ENCODE measurements at regions of chr10 and their contacts with region 1.

Region 1: GRCh38 chr10:110137142-110137545 is 70.3 kb upstream of the MXI1 start:
- DNase-seq: peak; percentile 77
- H3K4me3 Mint-ChIP-seq: no peak overlapping the region
- H3K27ac Mint-ChIP-seq: peak overlapping the region; percentile 64
- H3K4me1 Mint-ChIP-seq: peaks cover 25% of the 10 kb centered on the region
- H3K27me3 Mint-ChIP-seq: no peaks in the 10 kb centered on the region

Region 2: DNA sequence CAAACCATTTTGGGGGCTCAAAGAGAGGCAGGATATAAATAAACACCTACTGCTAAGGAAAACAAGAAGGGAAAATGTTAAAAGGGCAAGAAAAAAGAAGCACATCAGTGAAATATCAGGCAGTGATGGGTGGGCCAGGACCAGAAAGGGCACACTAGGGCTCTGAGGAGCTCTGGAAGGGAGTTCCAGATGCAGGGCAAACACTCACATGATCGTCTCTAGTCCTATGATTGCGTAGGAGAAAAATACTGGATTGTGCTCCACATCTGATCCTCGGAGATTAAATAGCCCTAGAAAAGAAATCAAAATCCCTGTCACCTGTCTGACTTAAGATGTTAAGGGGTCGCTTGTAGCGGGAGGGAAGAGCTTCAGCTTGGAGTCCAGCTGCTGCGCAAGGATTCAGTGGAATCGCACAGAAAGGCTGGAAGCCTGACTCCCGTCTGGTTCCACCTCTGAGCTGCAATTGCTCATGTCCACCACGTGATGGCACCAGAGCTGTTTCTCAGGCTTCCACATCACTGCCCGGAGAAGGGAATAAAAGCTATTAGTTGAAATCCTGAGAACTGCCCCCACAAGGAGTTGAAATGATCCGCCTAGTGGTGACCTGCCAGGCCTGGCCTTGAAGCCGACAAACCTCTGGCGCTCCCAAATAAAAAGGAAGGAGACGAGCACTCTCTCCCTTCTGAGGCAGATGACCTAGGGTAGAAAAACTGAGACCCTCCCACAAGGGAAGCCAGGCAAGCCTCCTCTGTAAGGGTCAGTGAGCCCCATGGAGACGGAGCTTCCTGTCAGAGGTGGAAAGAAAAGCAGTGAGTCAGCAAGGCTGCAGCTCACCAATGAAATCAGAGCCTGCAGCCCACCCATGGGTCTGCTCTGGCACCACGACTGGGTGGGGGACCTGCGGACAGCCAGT is 253.0 kb before region 1 on chr10:
- intact Hi-C with region 1: loop called (anchors 1 kb)
- DNase-seq: peak; percentile 87
- H3K4me3 Mint-ChIP-seq: no peak overlapping the region
- H3K27ac Mint-ChIP-seq: no peak overlapping the region
- H3K4me1 Mint-ChIP-seq: peaks cover 13% of the 10 kb centered on the region
- H3K27me3 Mint-ChIP-seq: no peaks in the 10 kb centered on the region

Region 3: DNA sequence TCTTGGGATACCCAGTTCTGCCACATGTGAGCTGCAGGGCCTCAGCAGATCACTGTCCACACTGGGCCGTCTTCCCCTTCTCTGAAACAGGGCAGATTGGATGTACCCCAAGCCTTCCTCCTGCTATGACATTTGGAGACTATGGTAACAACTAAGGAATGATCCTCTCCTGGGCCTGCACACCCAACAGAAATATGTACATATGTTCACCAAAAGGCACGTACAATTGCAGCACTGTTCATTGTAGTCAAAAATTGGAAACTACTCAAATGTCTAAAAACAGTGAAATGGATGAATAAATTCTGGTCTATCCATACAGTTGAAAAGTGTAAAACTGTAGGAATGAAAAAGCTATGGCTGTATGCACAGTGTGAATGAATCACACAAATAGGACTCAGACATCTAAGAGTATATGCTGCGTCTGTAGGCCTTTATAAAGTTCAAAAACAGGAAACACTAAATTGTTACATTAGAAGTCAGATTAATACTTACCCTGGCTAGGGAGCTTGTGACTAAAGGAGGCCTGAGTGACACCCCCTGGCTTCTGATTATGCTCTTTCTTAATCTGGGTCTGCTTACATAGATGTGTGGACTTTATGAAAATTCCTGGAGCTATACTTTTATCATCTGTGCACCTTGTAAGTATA is 197.7 kb before region 1 on chr10:
- intact Hi-C with region 1: no loop called
- DNase-seq: no peak
- H3K4me3 Mint-ChIP-seq: no peak overlapping the region
- H3K27ac Mint-ChIP-seq: no peak overlapping the region
- H3K4me1 Mint-ChIP-seq: peaks cover 13% of the 10 kb centered on the region
- H3K27me3 Mint-ChIP-seq: peaks cover 1% of the 10 kb centered on the region

Region 4: DNA sequence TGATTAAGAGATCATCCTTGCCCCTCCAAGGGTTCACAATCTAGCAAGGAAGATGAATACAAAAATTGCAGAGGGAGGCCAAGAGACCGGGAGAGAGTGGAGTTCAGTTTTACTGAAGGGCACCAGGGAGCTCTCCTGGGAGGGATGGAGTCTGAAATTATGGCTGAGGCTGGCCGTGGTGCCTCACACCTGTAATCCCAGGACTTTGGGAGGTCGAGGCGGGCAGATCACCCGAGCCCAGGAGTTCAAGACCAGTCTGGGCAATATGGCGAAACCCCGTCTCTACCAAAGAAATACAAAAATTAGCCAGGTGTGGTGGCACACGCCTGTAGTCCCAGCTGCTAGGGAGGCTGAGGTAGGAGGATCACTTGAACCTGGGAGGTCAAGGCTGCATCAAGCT is 18.9 kb after region 1 on chr10:
- intact Hi-C with region 1: loop called (anchors 1 kb)
- DNase-seq: no peak
- H3K4me3 Mint-ChIP-seq: no peak overlapping the region
- H3K27ac Mint-ChIP-seq: no peak overlapping the region
- H3K4me1 Mint-ChIP-seq: peaks cover 46% of the 10 kb centered on the region
- H3K27me3 Mint-ChIP-seq: peaks cover 76% of the 10 kb centered on the region

Region 5: GRCh38 chr10:110252151-110252550 is 115.0 kb after region 1 on chr10:
- intact Hi-C with region 1: loop called (anchors 1 kb)
- DNase-seq: no peak
- H3K4me3 Mint-ChIP-seq: no peak overlapping the region
- H3K27ac Mint-ChIP-seq: peak overlapping the region; percentile 56
- H3K4me1 Mint-ChIP-seq: peaks cover 34% of the 10 kb centered on the region
- H3K27me3 Mint-ChIP-seq: peaks cover 31% of the 10 kb centered on the region

Region 6: DNA sequence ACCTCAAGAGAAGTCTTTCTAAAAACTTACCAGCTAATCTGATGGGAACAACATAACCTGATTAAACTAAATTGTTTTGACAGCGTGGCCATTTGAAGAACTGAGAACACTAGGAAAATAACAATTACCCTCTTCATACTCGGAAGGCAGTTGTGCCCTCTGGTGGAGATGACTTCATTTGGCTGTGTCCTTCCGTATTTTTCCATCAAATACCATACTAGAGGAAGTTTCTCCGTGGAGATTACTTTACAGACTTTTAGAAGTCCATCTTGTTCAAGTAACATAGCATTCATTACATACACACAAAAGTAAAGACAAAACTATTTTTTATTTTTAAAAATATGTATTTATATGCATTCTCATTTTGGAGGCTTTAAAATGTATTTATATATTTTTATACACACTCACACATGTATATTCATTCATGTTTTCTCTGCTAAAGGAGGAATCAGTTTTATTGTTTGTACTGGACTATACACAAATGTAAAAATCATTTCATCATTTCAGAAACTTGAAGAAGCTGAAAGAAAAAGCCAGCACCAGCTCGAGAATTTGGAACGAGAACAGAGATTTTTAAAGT is 142.4 kb after region 1 on chr10:
- intact Hi-C with region 1: loop called (anchors 1 kb)
- DNase-seq: peak; percentile 81
- H3K4me3 Mint-ChIP-seq: no peak overlapping the region
- H3K27ac Mint-ChIP-seq: no peak overlapping the region
- H3K4me1 Mint-ChIP-seq: peaks cover 11% of the 10 kb centered on the region
- H3K27me3 Mint-ChIP-seq: peaks cover 13% of the 10 kb centered on the region

Region 7: GRCh38 chr10:110567201-110568054 is 430.3 kb after region 1 on chr10 and contains the start of gene SMC3:
- intact Hi-C with region 1: loop called (anchors 10 kb)
- DNase-seq: peak; percentile 98
- H3K4me3 Mint-ChIP-seq: peak within 1 kb of the TSS; percentile 97
- H3K27ac Mint-ChIP-seq: peak within 1 kb of the TSS; percentile 98
- H3K4me1 Mint-ChIP-seq: peaks cover 32% of the 10 kb centered on the region
- H3K27me3 Mint-ChIP-seq: peaks cover 21% of the 10 kb centered on the region
- total RNA-seq, gene SMC3: 82.2 and 87.3 TPM in 2 replicates

Region 8: GRCh38 chr10:111716032-111716431 is 1578.9 kb after region 1 on chr10:
- intact Hi-C with region 1: no loop called
- DNase-seq: no peak
- H3K4me3 Mint-ChIP-seq: no peak overlapping the region
- H3K27ac Mint-ChIP-seq: no peak overlapping the region
- H3K4me1 Mint-ChIP-seq: no peaks in the 10 kb centered on the region
- H3K27me3 Mint-ChIP-seq: no peaks in the 10 kb centered on the region

Measured in activated CD4-positive, alpha-beta T cell treated with anti-CD3 and anti-CD28 coated beads, Interleukin-2, amount 10 ng/mL, durations not matched to agents 24 days and 14 days (primary cell).